Sciatic nerve (tissue), 2 donors: ENCODE measurements at regions of chrX and their contacts with region 1.

Region 1: DNA sequence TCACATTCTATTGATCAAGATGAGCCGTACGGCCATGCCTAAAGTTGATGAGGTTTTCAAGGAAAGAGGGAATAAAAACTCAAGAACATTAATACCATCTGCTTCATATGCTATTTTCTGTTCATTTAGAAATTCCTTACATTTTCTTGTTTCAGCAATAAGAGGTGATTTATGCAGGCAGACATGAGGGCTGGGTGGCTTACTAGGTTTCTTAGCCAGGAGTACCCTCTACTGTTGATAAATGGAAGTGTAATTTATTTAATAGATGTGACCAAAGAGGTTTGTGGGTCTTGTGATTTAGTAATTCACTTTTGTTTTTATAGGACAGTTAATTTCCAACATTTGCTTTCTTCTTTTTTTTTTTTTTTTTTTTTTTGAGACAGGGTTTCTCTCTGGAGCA is 6.4 kb upstream of the SMIM9 start:
- DNase-seq: no peak
- ATAC-seq: no peak

Region 2: GRCh38 chrX:154762523-154763289 is 78.2 kb before region 1 on chrX and contains the start of gene DKC1:
- intact Hi-C with region 1: no loop called
- DNase-seq: peak; percentile 96
- ATAC-seq: peak; percentile 99
- total RNA-seq, gene DKC1: 27.9 TPM

Region 3: GRCh38 chrX:154804957-154805695 is 35.7 kb before region 1 on chrX and contains the start of gene MPP1:
- intact Hi-C with region 1: loop called (anchors 1 kb)
- DNase-seq: peak; percentile 83
- ATAC-seq: peak; percentile 98
- total RNA-seq, gene MPP1: 52.0 TPM

Region 4: DNA sequence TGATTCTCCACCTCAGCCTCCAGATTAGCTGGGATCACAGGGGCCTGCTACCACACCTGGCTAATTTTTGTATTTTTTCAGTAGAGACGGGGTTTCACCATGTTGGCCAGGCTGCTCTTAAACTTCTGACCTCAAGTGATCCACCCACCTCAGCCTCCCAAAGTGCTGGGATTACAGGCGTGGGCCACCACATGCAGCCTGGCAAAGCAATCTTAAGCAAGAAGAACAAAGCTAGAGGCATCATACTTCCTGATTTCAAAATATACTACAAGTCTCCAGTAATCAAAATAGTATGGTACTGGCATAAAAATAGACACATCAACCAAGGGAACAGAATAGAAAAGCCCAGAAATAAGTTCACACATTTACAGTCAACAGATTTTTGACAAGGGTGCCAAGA is 32.5 kb after region 1 on chrX:
- intact Hi-C with region 1: no loop called
- DNase-seq: no peak
- ATAC-seq: no peak